IMR-90 (cell line): ENCODE measurements at regions of chr14 and their contacts with region 1.

Region 1: GRCh38 chr14:52455291-52456088 is 96.8 kb downstream of the TXNDC16 start:
- DNase-seq: peak; percentile 87
- ATAC-seq: peak; percentile 56
- H3K4me3 ChIP-seq: no peak overlapping the region
- H3K27ac ChIP-seq: peak overlapping the region; percentile 67; the same call in 1 of the 2 replicates
- H3K4me1 ChIP-seq: peaks cover 10% of the 10 kb centered on the region
- H3K27me3 ChIP-seq: no peaks in the 10 kb centered on the region
- CTCF ChIP-seq: no peak
- POLR2A ChIP-seq: no peak
- RAD21 ChIP-seq: no peak

Region 2: GRCh38 chr14:51989293-51990234 is 465.9 kb before region 1 on chr14 and contains the start of gene RTRAF:
- CTCF ChIA-PET with region 1: no interaction called
- POLR2A ChIA-PET with region 1: no interaction called
- dilution Hi-C with region 1: no loop called
- in situ Hi-C with region 1: no loop called
- intact Hi-C with region 1: loop called (anchors 10 kb)
- DNase-seq: peak; percentile 92
- ATAC-seq: peak; percentile 99
- H3K4me3 ChIP-seq: peak within 1 kb of the TSS; percentile 86
- H3K27ac ChIP-seq: peak within 1 kb of the TSS; percentile 85
- H3K4me1 ChIP-seq: peaks cover 2% of the 10 kb centered on the region; the same call in 1 of the 2 replicates
- H3K27me3 ChIP-seq: no peaks in the 10 kb centered on the region
- CTCF ChIP-seq: no peak
- POLR2A ChIP-seq: peak; percentile 82
- RAD21 ChIP-seq: no peak
- total RNA-seq, gene RTRAF: 53.2 and 94.7 TPM in 2 replicates

Region 3: DNA sequence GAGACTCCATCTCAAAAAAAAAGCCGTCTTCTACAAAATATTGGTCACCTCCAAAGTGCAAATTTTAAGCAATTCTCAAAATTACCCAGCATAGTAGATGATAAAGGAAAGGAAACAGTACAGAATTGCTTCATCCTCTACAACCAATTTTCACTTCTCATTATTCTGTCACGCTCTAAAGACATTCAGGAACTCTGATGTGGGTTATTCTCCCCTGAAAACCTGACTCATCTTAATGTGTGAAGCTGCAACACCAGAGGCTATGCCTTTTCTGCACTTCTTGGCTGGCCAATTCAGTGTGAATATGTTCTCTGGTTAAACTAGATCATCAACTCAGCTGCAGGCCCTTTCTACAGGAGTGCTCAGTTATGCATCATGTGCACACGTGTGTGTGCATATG is 130.4 kb before region 1 on chr14:
- CTCF ChIA-PET with region 1: no interaction called
- POLR2A ChIA-PET with region 1: no interaction called
- dilution Hi-C with region 1: no loop called
- in situ Hi-C with region 1: loop called (anchors 10 kb)
- intact Hi-C with region 1: no loop called
- DNase-seq: peak; percentile 25
- ATAC-seq: no peak
- H3K4me3 ChIP-seq: no peak overlapping the region
- H3K27ac ChIP-seq: peak overlapping the region; percentile 76; the same call in 1 of the 2 replicates
- H3K4me1 ChIP-seq: peaks cover 25% of the 10 kb centered on the region
- H3K27me3 ChIP-seq: no peaks in the 10 kb centered on the region
- CTCF ChIP-seq: no peak
- POLR2A ChIP-seq: no peak
- RAD21 ChIP-seq: no peak

Region 4: DNA sequence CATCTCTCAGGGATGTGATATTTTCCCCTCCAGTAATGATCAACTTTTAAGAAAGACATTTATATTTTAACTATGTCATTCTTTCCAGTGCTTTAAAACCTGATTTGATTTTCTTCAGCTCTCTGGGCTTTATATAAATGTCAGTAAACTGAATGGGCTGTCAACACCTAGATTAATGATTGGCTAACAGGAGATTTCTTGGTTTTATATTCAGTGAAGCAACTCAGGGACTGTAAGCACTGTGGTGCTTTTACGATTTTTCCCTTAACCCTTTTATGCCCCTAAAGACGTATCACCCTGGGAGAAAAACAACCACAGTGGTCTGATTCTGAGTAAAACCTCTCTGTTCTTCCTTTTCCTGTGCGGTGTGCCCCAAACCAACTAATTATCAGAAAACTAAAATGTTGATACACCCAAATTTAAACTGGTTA is 103.4 kb before region 1 on chr14:
- CTCF ChIA-PET with region 1: no interaction called
- POLR2A ChIA-PET with region 1: no interaction called
- dilution Hi-C with region 1: no loop called
- in situ Hi-C with region 1: no loop called
- intact Hi-C with region 1: loop called (anchors 2 kb)
- DNase-seq: no peak
- ATAC-seq: no peak
- H3K4me3 ChIP-seq: no peak overlapping the region
- H3K27ac ChIP-seq: peak overlapping the region; percentile 72; the same call in 1 of the 2 replicates
- H3K4me1 ChIP-seq: peaks cover 28% of the 10 kb centered on the region
- H3K27me3 ChIP-seq: no peaks in the 10 kb centered on the region
- CTCF ChIP-seq: no peak
- POLR2A ChIP-seq: no peak
- RAD21 ChIP-seq: no peak

Region 5: DNA sequence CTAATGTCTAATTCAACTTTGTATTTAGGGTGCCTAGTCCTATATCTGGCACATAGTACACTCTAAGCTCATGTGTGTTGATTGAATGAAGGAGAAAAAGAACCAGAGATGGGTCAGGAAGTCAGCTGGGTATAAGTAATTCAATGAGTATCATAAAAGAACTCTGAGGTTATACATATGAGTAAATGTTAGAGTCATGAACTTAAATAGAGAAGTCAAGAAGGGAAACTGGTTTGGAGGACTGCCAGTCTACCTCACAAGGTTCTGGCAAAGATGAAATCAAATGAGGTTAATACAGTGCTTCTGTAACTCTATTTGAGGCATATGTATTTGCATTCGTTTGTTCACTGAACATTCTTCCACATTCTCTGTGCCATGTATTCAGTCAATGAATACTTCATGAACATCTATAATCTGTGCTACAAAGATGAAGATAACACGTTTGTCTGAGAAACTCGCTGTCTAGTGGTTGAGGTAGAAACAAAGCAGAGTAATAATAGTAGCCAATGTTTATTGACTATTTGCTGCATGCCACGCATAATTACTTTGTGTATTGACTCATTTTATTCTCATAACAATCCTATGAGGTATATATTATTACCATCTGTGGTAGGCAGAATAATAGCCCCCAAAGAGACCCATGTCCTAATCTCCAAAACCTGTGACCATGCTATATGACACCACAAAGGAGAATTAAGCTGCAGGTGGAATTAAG is 52.5 kb before region 1 on chr14:
- CTCF ChIA-PET with region 1: no interaction called
- POLR2A ChIA-PET with region 1: no interaction called
- dilution Hi-C with region 1: no loop called
- in situ Hi-C with region 1: no loop called
- intact Hi-C with region 1: loop called (anchors 5 kb)
- DNase-seq: peak; percentile 72
- ATAC-seq: no peak
- H3K4me3 ChIP-seq: no peak overlapping the region
- H3K27ac ChIP-seq: no peak overlapping the region
- H3K4me1 ChIP-seq: peaks cover 22% of the 10 kb centered on the region
- H3K27me3 ChIP-seq: no peaks in the 10 kb centered on the region
- CTCF ChIP-seq: no peak
- POLR2A ChIP-seq: no peak
- RAD21 ChIP-seq: no peak

Region 6: DNA sequence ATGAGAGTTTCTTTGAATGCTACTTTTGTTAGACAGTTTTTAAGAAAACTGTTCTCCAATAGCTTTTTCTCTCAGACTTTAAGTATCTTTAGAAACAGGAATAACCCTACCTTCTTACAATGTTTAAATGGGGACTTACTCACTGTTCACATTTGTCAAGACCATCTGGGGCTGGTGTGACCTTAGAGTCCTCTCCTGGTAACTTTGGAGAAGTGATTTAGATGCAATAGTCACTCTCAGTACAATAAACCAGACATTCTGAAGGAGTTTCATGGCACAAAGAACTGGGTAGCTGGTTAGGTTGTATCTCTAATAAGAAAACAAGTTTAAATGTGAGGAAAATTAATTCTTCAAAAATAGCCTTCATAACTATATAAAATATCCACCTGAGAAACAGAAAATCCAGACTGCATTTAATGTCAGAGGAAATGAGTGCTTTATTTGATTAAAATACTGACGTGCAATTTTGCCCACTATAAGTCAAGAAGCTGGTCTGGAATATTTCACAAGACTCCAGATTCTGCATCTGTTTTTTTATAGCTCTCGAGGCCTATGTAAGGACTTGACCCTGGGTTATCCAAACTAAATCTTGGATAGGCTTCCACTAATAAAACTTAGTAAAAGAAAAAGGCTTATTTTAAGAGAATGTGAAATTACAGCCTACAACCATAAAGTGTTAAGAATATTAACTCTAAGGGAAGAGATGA is 32.7 kb before region 1 on chr14:
- CTCF ChIA-PET with region 1: no interaction called
- POLR2A ChIA-PET with region 1: no interaction called
- dilution Hi-C with region 1: no loop called
- in situ Hi-C with region 1: no loop called
- intact Hi-C with region 1: loop called (anchors 5 kb)
- DNase-seq: no peak
- ATAC-seq: no peak
- H3K4me3 ChIP-seq: no peak overlapping the region
- H3K27ac ChIP-seq: no peak overlapping the region
- H3K4me1 ChIP-seq: no peaks in the 10 kb centered on the region; the same call in 1 of the 2 replicates
- H3K27me3 ChIP-seq: no peaks in the 10 kb centered on the region
- CTCF ChIP-seq: no peak
- POLR2A ChIP-seq: no peak
- RAD21 ChIP-seq: no peak